ENCODE measurements at regions of chr13 and their contacts with region 1.

Region 1: GRCh38 chr13:27053902-27054595 is 117.6 kb downstream of the USP12 start:
- DNase-seq: no peak
- ATAC-seq: no peak
- H3K4me3 Mint-ChIP-seq: no peak overlapping the region
- H3K27ac Mint-ChIP-seq: no peak overlapping the region
- H3K4me1 Mint-ChIP-seq: peaks cover 5% of the 10 kb centered on the region
- H3K27me3 Mint-ChIP-seq: no peaks in the 10 kb centered on the region
- CTCF ChIP-seq: no peak

Region 2: GRCh38 chr13:27038323-27038722 is 15.7 kb before region 1 on chr13:
- CTCF ChIA-PET with region 1: no interaction called
- POLR2A ChIA-PET with region 1: no interaction called
- intact Hi-C with region 1: no loop called
- DNase-seq: no peak
- ATAC-seq: no peak
- H3K4me3 Mint-ChIP-seq: no peak overlapping the region
- H3K27ac Mint-ChIP-seq: no peak overlapping the region
- H3K4me1 Mint-ChIP-seq: peaks cover 6% of the 10 kb centered on the region
- H3K27me3 Mint-ChIP-seq: peaks cover 15% of the 10 kb centered on the region
- CTCF ChIP-seq: no peak

Region 3: DNA sequence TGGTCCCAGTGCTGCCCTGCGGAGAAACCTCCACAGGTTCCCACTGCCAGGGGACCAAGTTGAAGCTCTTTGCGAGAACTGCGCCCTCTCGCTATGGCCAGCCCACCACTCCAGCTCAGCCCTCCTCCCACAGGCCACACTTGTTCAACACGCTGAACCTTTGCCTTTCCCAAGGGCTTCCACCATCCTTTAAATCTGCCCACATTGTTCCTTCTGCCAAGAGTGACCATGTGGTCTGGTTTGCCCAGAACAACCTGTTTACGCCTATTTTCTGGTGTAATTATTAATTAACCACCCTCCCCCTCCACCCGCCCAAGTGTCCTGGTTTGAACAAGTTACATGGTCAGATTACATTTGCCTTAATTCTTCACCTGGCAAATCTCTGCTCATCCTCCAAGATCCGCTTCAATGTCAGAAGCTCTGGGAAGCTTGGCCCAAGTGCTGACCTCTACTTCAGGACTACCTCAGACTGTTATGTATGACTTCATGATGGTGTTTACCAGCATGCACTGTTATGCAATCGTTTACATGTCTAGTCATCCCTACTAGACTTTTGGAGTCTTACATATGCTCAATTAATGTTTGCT is 129.6 kb after region 1 on chr13:
- CTCF ChIA-PET with region 1: no interaction called
- POLR2A ChIA-PET with region 1: interaction called, 17 read pairs
- intact Hi-C with region 1: no loop called
- DNase-seq: no peak
- ATAC-seq: no peak
- H3K4me3 Mint-ChIP-seq: no peak overlapping the region
- H3K27ac Mint-ChIP-seq: no peak overlapping the region
- H3K4me1 Mint-ChIP-seq: no peaks in the 10 kb centered on the region
- H3K27me3 Mint-ChIP-seq: no peaks in the 10 kb centered on the region
- CTCF ChIP-seq: no peak

Measured in activated B cell treated with CpG ODN at 0.5 μM for 24 hours (primary cell).